ENCODE measurements at regions of chr21 and their contacts with region 1.

Region 1: GRCh38 chr21:34073032-34073869 is at the starts of genes MRPS6 and SLC5A3:
- DNase-seq: peak; percentile 76
- H3K4me3 Mint-ChIP-seq: peak within 1 kb of the TSS; percentile 85
- H3K27ac Mint-ChIP-seq: peak within 1 kb of the TSS; percentile 71
- H3K4me1 Mint-ChIP-seq: peaks cover 45% of the 10 kb centered on the region
- H3K27me3 Mint-ChIP-seq: no peaks in the 10 kb centered on the region
- total RNA-seq, gene MRPS6: 75.2 to 79.2 TPM
- total RNA-seq, gene SLC5A3: 23.3 to 26.0 TPM

Region 2: DNA sequence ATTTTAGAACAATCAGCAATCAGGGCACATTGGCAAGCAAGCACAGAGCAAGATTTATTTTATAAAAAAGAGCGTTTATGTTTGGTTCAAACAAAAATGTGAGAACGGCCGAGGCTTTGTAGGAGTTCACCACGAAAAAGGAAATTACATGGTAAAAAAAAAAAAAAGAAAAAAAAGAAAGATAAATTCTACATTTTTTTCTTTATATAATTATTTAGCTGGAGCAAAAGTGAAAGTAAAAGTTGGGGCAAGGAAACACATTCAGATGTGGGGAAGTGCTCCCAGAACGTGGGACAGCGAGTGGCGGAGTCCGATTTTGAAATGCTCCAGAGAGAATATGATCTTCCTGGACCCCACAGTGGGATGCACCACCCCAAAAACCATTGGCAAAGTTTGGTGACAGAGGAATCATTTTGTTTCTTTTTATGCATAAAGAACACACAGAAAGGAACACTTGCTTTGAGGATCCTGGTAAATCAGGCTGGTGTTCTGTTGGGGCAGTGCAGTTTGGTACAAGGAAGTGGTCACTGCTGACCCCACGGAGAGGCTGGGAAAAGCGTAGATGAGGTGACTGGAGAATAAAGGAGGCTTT is 141.4 kb before region 1 on chr21:
- CTCF ChIA-PET with region 1: interaction called, 4 read pairs
- POLR2A ChIA-PET with region 1: interaction called, 21 read pairs
- DNase-seq: no peak
- H3K4me3 Mint-ChIP-seq: peak overlapping the region; percentile 94
- H3K27ac Mint-ChIP-seq: peak overlapping the region; percentile 97
- H3K4me1 Mint-ChIP-seq: peaks cover 48% of the 10 kb centered on the region
- H3K27me3 Mint-ChIP-seq: no peaks in the 10 kb centered on the region

Region 3: DNA sequence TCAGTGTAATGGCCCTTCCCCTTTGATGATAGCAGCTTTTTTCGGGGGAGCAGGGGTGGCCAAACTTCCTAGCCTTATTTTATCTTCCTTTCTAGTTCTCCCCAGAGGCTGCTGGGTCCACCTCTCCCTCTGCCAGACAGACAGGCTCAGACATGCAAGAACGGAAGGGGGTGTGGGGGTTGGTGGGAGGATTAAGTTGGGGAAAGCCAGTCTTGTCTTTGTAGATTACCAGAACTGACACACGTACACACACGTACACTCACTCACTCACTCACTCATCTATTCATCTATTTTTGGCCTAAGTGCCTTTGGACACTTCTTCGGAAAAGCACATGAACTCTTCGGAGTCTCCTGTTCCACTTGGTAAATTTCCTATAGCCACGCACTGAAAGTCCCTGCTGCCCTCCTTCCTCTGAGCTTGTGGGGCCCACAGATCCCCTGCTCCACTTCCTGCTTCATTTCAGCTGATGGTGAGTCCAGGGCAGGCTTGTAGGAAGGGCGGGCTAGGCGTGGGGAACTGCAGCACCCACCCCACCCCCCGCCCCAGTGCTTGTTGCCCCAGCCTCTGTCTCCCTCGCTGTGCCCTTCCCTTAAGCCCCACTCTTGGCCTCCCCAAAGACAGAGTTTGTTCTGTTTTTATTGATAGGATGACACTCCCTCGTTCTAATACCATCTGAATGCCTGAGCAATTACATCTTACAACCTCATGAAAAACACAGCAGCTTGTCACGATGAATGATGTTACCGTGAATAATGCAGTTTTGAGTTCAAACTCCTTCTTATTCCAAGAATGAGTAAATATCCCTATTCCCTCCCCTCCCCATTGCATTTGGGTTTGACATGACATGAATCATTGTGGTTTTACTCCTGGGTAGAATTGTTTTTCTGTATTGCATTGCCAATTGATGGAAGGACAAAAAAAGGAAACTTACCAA is 96.9 kb before region 1 on chr21:
- CTCF ChIA-PET with region 1: no interaction called
- POLR2A ChIA-PET with region 1: interaction called, 39 read pairs
- DNase-seq: peak; percentile 58
- H3K4me3 Mint-ChIP-seq: peak overlapping the region; percentile 62
- H3K27ac Mint-ChIP-seq: peak overlapping the region; percentile 94
- H3K4me1 Mint-ChIP-seq: peaks cover 81% of the 10 kb centered on the region
- H3K27me3 Mint-ChIP-seq: no peaks in the 10 kb centered on the region

Region 4: DNA sequence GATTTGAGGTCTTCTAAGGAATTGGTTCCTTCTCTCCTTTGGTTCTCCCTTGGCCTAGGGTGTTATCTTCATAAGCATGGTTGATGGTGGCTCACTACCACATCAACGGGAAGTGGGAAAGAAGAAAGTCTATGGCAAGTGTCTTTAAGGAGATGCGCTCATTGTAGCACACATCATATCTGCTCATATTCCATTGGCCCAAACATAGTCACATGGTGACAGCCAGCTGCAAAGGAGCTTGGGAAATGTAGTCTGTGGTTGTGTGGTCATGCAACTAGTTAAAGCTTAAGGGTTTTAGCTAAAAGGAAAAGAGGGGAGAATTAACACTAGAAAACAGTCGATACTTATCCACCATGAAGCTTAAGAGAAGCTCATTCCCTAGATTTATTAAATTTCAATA is 11.3 kb before region 1 on chr21:
- CTCF ChIA-PET with region 1: no interaction called
- POLR2A ChIA-PET with region 1: interaction called, 13 read pairs
- DNase-seq: no peak
- H3K4me3 Mint-ChIP-seq: no peak overlapping the region
- H3K27ac Mint-ChIP-seq: no peak overlapping the region
- H3K4me1 Mint-ChIP-seq: peaks cover 3% of the 10 kb centered on the region
- H3K27me3 Mint-ChIP-seq: peaks cover 11% of the 10 kb centered on the region

Region 5: GRCh38 chr21:34148419-34148804 is 75.2 kb after region 1 on chr21:
- CTCF ChIA-PET with region 1: no interaction called
- POLR2A ChIA-PET with region 1: no interaction called
- DNase-seq: no peak
- H3K4me3 Mint-ChIP-seq: no peak overlapping the region
- H3K27ac Mint-ChIP-seq: no peak overlapping the region
- H3K4me1 Mint-ChIP-seq: peaks cover 12% of the 10 kb centered on the region
- H3K27me3 Mint-ChIP-seq: no peaks in the 10 kb centered on the region

Region 6: DNA sequence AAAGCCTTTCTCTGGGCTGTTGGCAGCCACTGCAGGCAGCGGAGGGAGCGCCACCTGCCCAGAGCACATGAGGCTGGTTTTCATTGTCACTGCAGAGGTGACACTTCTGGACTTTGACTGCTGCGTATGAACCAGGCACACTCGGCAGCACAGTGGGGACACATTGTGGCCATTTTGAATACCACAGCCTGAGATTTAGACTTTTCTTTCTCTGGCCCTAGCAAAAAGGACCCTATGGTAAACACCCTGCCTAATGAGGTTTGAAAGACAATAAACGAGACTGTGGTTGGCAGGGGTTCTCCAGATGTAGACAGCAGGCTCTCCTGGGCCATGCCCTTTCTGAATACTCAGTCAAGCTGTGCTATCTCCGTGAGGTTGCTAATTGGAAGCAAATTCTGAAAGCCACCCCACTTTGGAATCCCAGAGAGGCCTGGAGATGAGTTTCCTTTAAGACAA is 278.6 kb after region 1 on chr21:
- CTCF ChIA-PET with region 1: interaction called, 17 read pairs
- POLR2A ChIA-PET with region 1: interaction called, 3 read pairs
- DNase-seq: peak; percentile 37
- H3K4me3 Mint-ChIP-seq: no peak overlapping the region
- H3K27ac Mint-ChIP-seq: no peak overlapping the region
- H3K4me1 Mint-ChIP-seq: peaks cover 4% of the 10 kb centered on the region
- H3K27me3 Mint-ChIP-seq: peaks cover 21% of the 10 kb centered on the region